SK-N-SH (cell line): ENCODE measurements at regions of chr1 and their contacts with region 1.

Region 1: DNA sequence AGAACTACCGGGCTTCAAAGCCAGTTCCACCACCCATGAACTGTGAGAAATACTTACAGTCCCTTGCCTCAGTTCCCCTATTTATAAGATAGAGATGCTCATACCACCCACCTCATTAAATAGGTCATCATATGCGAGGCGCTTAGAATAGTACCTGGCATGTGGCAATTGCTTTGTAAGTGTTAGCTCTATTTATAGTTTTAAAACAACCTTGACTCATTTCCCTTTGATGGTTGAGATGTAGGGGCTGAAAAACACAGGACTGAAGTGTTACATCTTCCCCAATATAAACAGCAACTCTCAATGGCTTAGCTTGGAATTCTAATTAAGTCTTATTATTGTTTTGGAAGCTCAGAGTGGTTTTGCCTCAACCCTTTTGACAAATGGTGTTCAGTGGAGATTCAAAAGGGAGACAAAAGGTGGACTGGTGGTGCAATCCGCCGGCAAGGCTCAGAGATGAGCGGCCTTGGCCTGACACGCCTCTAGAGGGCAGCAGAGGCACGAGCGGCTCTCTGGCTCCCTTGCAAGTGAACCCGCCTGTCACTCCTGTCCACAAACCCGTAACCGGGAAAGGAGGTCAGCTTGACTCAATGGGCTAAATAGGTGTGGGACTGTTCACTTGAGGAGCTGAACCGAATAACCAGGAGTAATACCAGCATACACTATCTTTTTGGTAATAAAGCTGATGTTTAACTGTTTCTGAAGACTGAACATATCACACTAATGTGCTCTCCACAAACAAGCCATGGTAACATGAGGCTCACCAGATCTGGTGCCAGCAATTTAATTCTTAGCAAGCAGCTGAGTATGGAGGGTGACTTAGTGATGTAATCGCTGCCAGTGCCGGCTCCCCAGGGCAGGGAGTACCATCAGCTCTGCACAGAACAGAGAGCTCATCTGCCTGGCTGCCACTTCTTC is 19.5 kb upstream of the SMYD2 start:
- DNase-seq: peak; percentile 72
- H3K4me3 ChIP-seq: peak overlapping the region; percentile 26 to 42; a peak in 3 of 4 replicates
- H3K27ac ChIP-seq: peak overlapping the region in 1 of 2 experiments; percentile 36; a peak in 2 of 4 replicates
- H3K4me1 ChIP-seq: peaks cover 8 to 10% of the 10 kb centered on the region in 2 experiments; a peak in 3 of 4 replicates
- H3K27me3 ChIP-seq: no peaks in the 10 kb centered on the region
- CTCF ChIP-seq: peak; percentile 98
- EP300 ChIP-seq: no peak
- RAD21 ChIP-seq: peak; percentile 91

Region 2: DNA sequence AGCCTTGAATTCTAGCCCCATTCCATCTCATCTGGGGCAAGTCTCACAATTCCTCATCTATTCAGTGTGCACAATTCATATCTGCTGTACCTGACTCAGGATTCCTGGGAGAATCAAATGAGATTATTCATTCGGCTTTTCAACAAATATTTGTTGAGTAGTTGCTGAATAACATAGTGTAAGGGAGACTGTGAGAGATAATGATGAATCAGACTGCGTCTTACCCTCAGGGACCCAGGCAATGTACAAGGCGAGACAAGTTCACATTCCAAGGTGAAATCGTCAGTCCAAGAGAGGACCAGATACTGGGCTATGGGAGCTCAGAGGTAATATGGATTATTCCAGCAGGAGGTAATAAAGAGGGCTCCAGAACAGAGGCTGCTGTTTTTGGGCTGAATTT is 48.3 kb before region 1 on chr1:
- CTCF ChIA-PET with region 1: interaction called, 48 read pairs
- POLR2A ChIA-PET with region 1: no interaction called
- DNase-seq: no peak
- H3K4me3 ChIP-seq: no peak overlapping the region
- H3K27ac ChIP-seq: no peak overlapping the region
- H3K4me1 ChIP-seq: peaks cover 0 to 3% of the 10 kb centered on the region in 2 experiments; a peak in 1 of 4 replicates
- H3K27me3 ChIP-seq: peaks cover 8% of the 10 kb centered on the region; the same call in 1 of the 2 replicates
- CTCF ChIP-seq: no peak
- EP300 ChIP-seq: no peak
- RAD21 ChIP-seq: no peak

Region 3: GRCh38 chr1:214234635-214235025 is 26.8 kb before region 1 on chr1:
- CTCF ChIA-PET with region 1: interaction called, 23 read pairs
- POLR2A ChIA-PET with region 1: no interaction called
- DNase-seq: no peak
- H3K4me3 ChIP-seq: no peak overlapping the region
- H3K27ac ChIP-seq: no peak overlapping the region
- H3K4me1 ChIP-seq: no peaks in the 10 kb centered on the region
- H3K27me3 ChIP-seq: no peaks in the 10 kb centered on the region
- CTCF ChIP-seq: no peak
- EP300 ChIP-seq: no peak
- RAD21 ChIP-seq: no peak

Region 4: GRCh38 chr1:214276786-214277345 is 15.4 kb after region 1 on chr1:
- CTCF ChIA-PET with region 1: interaction called, 35 read pairs
- POLR2A ChIA-PET with region 1: interaction called, 3 read pairs
- DNase-seq: no peak
- H3K4me3 ChIP-seq: no peak overlapping the region
- H3K27ac ChIP-seq: no peak overlapping the region
- H3K4me1 ChIP-seq: peaks cover 3 to 10% of the 10 kb centered on the region in 2 experiments; a peak in 2 of 4 replicates
- H3K27me3 ChIP-seq: no peaks in the 10 kb centered on the region
- CTCF ChIP-seq: no peak
- EP300 ChIP-seq: no peak
- RAD21 ChIP-seq: no peak

Region 5: DNA sequence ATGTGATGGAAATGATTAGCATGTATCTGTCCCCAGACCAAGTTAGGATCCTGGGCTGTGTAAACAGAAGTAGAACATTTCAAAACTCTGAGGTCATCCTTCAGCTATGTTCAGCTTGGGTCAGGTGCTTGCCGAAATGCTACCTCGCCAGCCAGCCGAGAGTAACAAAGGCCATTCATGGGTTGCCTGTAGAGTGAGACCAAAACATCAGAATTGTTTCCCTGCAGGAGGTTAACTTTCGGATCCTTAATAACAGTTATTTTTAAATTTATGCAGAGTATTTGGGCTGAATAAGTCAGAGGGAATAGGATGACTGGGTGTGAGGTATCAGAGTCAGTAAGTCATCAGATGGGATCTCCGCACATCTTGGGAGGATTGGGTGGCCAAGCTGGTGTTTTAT is 55.1 kb after region 1 on chr1:
- CTCF ChIA-PET with region 1: interaction called, 52 read pairs
- POLR2A ChIA-PET with region 1: no interaction called
- DNase-seq: no peak
- H3K4me3 ChIP-seq: no peak overlapping the region
- H3K27ac ChIP-seq: no peak overlapping the region
- H3K4me1 ChIP-seq: peaks cover 0 to 5% of the 10 kb centered on the region in 2 experiments; a peak in 1 of 4 replicates
- H3K27me3 ChIP-seq: no peaks in the 10 kb centered on the region
- CTCF ChIP-seq: no peak
- EP300 ChIP-seq: no peak
- RAD21 ChIP-seq: no peak

Region 6: GRCh38 chr1:214584805-214585766 is 323.6 kb after region 1 on chr1:
- CTCF ChIA-PET with region 1: interaction called, 21 read pairs
- POLR2A ChIA-PET with region 1: no interaction called
- DNase-seq: no peak
- H3K4me3 ChIP-seq: no peak overlapping the region
- H3K27ac ChIP-seq: peak overlapping the region in 1 of 2 experiments; percentile 50; a peak in 2 of 4 replicates
- H3K4me1 ChIP-seq: peaks cover 3 to 38% of the 10 kb centered on the region in 2 experiments
- H3K27me3 ChIP-seq: no peaks in the 10 kb centered on the region
- CTCF ChIP-seq: peak; percentile 92
- EP300 ChIP-seq: no peak
- RAD21 ChIP-seq: peak; percentile 87